ENCODE measurements at regions of chr3 and their contacts with region 1.

Region 1: DNA sequence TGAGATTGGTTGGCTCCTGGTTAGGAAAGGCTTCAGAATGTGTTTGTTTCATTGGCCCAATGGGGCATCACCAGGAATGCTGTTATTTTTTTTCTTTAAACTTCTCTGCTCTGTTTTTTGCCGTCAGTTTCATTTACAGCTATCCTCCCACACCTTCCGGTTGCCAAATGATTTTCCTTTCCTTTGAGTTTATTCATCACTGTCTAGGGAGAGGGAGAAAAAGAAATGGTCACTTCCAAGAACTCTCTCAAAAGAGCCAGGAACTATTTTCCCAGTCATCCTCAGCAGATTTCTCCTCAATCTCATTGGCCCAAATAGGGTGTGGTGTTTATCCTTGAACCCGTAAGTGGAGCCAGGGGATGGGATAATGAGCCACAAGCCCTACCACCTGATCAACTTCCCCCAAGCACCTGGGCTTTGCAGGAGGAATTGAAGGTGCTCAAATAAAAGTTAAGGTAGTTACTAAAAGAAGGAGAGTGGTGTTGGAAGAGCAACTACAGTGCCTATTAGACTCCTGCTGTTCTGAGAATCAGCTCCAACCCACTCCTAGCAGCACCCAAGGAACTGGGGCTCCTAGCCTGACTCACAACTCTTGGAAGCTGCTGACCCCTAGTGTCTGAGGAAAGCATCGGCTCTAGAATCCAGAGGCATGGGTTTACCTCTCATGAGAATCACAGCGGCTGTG is 183.8 kb upstream of the IL12A start:
- DNase-seq: peak; percentile 19 to 53 (median 41)
- H3K4me3 ChIP-seq: no peak overlapping the region
- H3K27ac ChIP-seq: no peak overlapping the region
- H3K4me1 ChIP-seq: peaks cover 4% of the 10 kb centered on the region
- H3K27me3 ChIP-seq: no peaks in the 10 kb centered on the region
- CTCF ChIP-seq: peak; percentile 23 to 56 (median 50)
- EP300 ChIP-seq: no peak
- POLR2A ChIP-seq: no peak

Region 2: GRCh38 chr3:159260049-159260662 is 544.7 kb before region 1 on chr3:
- intact Hi-C with region 1: loop called in 1 of 4 experiments (anchors 10 kb)
- DNase-seq: peak in 3 of 5 donors; percentile 15 to 50 (median 34)
- H3K4me3 ChIP-seq: no peak overlapping the region
- H3K27ac ChIP-seq: no peak overlapping the region
- H3K4me1 ChIP-seq: no peaks in the 10 kb centered on the region
- H3K27me3 ChIP-seq: no peaks in the 10 kb centered on the region
- CTCF ChIP-seq: peak; percentile 31 to 78 (median 54)
- EP300 ChIP-seq: no peak
- POLR2A ChIP-seq: no peak

Region 3: DNA sequence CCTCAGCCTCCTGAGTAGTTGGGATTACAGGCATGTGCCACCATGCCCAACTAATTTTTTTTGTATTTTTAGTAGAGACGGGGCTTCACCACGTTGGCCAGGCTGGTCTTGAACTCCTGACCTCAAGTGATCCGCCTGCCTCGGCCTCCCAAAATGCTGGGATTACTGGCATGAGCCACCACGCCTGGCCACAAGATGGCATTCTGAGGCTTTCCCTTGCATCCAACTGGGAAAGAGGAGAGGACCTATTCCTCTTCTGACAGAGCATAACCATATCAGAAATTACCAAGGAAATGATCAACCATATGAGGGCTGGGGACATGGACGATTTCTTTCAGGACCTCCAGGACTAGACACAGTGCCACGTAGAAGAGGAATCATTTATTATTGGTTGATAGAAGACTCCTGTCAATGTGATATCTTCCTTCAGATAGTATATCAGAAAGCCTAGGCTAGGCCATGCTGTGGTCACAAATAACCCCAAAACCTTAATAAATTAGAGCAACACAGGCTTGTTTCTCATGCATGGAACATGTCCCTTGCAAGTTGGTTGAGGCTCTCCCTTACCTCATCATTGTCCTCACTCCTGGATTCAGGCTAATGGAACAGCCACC is 188.5 kb before region 1 on chr3:
- intact Hi-C with region 1: loop called in 1 of 4 experiments (anchors 5 kb)
- DNase-seq: no peak
- H3K4me3 ChIP-seq: no peak overlapping the region
- H3K27ac ChIP-seq: no peak overlapping the region
- H3K4me1 ChIP-seq: no peaks in the 10 kb centered on the region
- H3K27me3 ChIP-seq: no peaks in the 10 kb centered on the region
- CTCF ChIP-seq: no peak
- EP300 ChIP-seq: no peak
- POLR2A ChIP-seq: no peak

Region 4: GRCh38 chr3:159763602-159764489 is 41.0 kb before region 1 on chr3:
- intact Hi-C with region 1: loop called in 1 of 4 experiments (anchors 5 kb)
- DNase-seq: peak; percentile 28 to 70 (median 56)
- H3K4me3 ChIP-seq: peak overlapping the region; percentile 83
- H3K27ac ChIP-seq: peak overlapping the region; percentile 44 to 66
- H3K4me1 ChIP-seq: peaks cover 3% of the 10 kb centered on the region
- H3K27me3 ChIP-seq: no peaks in the 10 kb centered on the region
- CTCF ChIP-seq: peak in 1 of 3 donors; percentile 48
- EP300 ChIP-seq: no peak
- POLR2A ChIP-seq: peak; percentile 6

Region 5: GRCh38 chr3:159872374-159873109 is 67.7 kb after region 1 on chr3:
- intact Hi-C with region 1: no loop called
- DNase-seq: no peak
- H3K4me3 ChIP-seq: no peak overlapping the region
- H3K27ac ChIP-seq: no peak overlapping the region
- H3K4me1 ChIP-seq: no peaks in the 10 kb centered on the region
- H3K27me3 ChIP-seq: no peaks in the 10 kb centered on the region
- CTCF ChIP-seq: no peak
- EP300 ChIP-seq: no peak
- POLR2A ChIP-seq: no peak